Sciatic nerve (tissue), 2 donors: ENCODE measurements at regions of chr6 and their contacts with region 1.

Region 1: GRCh38 chr6:169019727-169020491 is 233.7 kb downstream of the THBS2 start:
- DNase-seq: no peak
- ATAC-seq: peak; percentile 48

Region 2: GRCh38 chr6:169058634-169059033 is 38.7 kb after region 1 on chr6:
- intact Hi-C with region 1: loop called (anchors 1 kb)
- DNase-seq: no peak
- ATAC-seq: no peak